Activated T-helper 2 cell treated with anti-CD3 and anti-CD28 coated beads, Interferon-gamma antibody, Interleukin-2, Interleukin-4, amounts not matched to agents 10 μg/mL and 5 μg/mL and 100 μg/mL, durations not matched to agents 14 hours and 24 hours and 36 hours (primary cell): ENCODE measurements at regions of chr2 and their contacts with region 1.

Region 1: DNA sequence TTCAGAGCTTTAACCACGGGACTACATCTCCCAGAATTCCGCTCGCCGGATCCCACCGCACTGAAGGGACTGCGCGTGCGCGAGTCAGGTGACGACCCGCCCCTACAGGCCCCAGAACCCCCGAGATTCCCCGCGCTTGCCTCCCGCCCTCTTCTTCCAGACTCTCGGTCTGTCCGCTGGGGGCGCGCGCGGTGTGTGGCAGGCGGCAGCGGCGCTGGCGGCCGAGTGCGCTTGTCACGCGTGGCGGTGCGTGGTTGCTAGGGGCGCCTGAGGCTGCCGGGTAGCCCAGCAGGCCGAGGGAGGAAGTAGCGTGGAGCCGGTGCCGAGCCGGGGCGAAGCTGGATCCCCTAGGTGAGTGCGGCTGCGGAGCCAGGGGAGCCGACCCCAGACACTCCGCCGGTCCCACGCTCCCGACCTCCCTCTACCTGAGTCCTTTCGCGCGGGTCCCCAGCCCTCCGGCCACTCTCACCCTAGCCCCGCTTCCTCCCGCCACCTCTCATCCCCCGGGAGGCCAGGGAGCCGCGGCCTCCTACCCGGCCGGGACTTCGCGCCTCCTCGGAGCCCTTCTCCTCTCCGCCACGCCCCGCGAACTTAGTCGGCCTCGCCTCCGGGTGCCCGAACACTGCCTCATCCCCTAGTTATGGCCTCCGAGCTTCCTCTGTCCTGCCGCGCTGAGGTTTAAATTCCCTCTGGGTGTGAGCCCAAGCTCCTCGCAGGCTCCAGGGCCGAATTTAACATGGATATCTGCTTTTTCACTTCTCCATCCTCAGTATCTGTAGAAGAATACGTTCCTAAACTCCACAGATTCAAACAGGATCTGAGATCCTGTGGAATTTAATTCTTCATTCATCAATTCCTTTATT is at the start of gene TTLL4:
- DNase-seq: peak; percentile 98
- H3K4me3 Mint-ChIP-seq: peak within 1 kb of the TSS; percentile 95
- H3K27ac Mint-ChIP-seq: peak within 1 kb of the TSS; percentile 84
- H3K4me1 Mint-ChIP-seq: peaks cover 17% of the 10 kb centered on the region
- H3K27me3 Mint-ChIP-seq: peaks cover 1% of the 10 kb centered on the region
- total RNA-seq, gene TTLL4: 55.7 and 64.7 TPM in 2 replicates

Region 2: DNA sequence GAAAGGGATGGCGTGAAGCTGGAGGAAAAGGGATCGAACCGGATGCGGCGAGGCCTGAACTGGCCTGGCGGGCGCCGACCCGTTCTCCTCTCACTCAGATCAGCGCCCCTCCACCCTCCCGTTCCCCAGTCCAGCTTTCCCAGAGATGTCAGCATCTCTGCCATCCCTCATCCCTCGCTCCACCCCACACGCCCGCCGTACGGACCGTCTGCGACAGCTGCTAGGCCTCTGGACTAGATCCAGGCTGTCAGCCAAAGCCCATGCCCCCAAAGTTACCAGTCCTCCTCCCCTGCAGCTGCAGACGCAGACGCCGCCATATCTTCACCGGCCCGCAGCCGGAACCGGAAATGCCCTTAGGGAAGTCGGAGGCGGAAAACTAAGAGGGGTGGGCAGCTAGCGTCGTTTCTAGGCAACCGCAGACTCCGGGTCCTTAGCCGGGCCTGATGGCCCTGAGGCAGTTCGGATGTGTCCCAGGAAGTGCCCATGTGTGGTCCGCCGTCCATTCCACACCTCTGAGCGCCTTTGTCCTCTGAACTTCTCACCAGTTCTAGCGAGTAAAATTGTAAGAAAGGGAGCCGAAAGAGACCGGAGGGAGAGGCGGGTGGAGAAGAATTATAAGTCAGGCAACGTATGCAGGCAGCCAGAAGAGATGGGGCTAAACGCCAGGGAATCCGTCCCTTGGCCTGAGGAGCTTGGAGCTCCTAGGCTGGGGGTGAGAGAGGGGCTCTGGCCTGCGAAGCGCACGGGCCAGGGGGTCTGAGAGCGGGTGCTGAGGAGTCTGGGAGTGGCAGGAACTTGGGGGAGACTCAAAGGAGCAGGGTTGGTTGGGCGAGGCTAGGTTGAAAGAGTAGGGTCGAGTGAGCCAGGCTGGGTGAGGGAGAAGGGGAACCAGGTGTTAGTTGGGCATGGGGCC is 39.0 kb before region 1 on chr2 and contains the starts of genes RNF25 and STK36:
- intact Hi-C with region 1: loop called (anchors 1 kb)
- DNase-seq: peak; percentile 75
- H3K4me3 Mint-ChIP-seq: peak within 1 kb of the TSS; percentile 92
- H3K27ac Mint-ChIP-seq: peak within 1 kb of the TSS; percentile 86
- H3K4me1 Mint-ChIP-seq: peaks cover 21% of the 10 kb centered on the region
- H3K27me3 Mint-ChIP-seq: no peaks in the 10 kb centered on the region
- total RNA-seq, gene RNF25: 21.6 and 25.8 TPM in 2 replicates
- total RNA-seq, gene STK36: 14.4 and 17.9 TPM in 2 replicates

Region 3: GRCh38 chr2:218733171-218734021 is 22.5 kb after region 1 on chr2:
- intact Hi-C with region 1: loop called (anchors 2 kb)
- DNase-seq: peak; percentile 16
- H3K4me3 Mint-ChIP-seq: no peak overlapping the region
- H3K27ac Mint-ChIP-seq: peak overlapping the region; percentile 48
- H3K4me1 Mint-ChIP-seq: peaks cover 28% of the 10 kb centered on the region
- H3K27me3 Mint-ChIP-seq: no peaks in the 10 kb centered on the region

Region 4: GRCh38 chr2:218876562-218877219 is 165.8 kb after region 1 on chr2:
- intact Hi-C with region 1: no loop called
- DNase-seq: peak; percentile 56
- H3K4me3 Mint-ChIP-seq: no peak overlapping the region
- H3K27ac Mint-ChIP-seq: no peak overlapping the region
- H3K4me1 Mint-ChIP-seq: peaks cover 17% of the 10 kb centered on the region
- H3K27me3 Mint-ChIP-seq: peaks cover 68% of the 10 kb centered on the region

Region 5: GRCh38 chr2:219498280-219499057 is 787.6 kb after region 1 on chr2 and contains the start of gene GMPPA:
- intact Hi-C with region 1: loop called (anchors 2 kb)
- DNase-seq: peak; percentile 95
- H3K4me3 Mint-ChIP-seq: peak within 1 kb of the TSS; percentile 96
- H3K27ac Mint-ChIP-seq: peak within 1 kb of the TSS; percentile 91
- H3K4me1 Mint-ChIP-seq: peaks cover 33% of the 10 kb centered on the region
- H3K27me3 Mint-ChIP-seq: peaks cover 43% of the 10 kb centered on the region
- total RNA-seq, gene GMPPA: 52.0 and 52.9 TPM in 2 replicates